CD8-positive, alpha-beta T cell (primary cell): ENCODE measurements at regions of chr9 and their contacts with region 1.

Region 1: DNA sequence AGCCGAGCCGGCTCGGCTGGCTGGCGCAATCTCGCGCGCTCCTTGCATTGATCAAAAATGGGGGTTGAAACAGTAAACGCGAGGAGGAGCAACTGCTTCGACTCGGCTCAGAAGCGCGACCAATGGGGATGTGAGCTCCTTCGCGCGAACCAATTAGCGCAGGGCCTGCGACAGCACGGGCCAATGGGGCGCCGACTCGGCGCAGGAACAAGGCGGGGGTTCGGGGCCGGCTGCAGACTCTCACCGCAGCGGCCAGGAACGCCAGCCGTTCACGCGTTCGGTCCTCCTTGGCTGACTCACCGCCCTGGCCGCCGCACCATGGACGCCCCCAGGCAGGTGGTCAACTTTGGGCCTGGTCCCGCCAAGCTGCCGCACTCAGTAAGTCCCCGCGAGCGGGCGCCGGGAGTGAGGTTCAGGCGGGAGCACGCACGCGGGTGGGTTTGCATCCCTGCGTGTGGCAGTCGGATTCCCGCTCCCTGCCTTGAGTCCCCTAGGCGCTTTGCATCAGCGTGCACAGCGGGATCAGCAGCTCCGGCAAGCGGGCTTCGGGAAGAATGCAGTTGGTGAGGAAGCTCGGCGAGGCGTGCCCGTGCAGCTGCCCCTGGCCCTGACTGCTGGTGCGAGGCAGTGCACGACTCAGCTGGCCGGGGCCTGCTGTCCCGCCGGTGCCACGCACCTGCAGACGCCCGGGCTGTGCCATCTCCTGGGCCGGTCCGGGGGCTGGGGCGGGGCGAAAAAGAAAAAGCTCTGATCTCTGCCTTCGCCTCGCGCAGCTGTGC is at the start of gene PSAT1:
- DNase-seq: peak; percentile 68 to 93 (median 85)
- ATAC-seq: peak; percentile 97
- H3K4me3 ChIP-seq: peak within 1 kb of the TSS; percentile 92 to 99
- H3K4me3 Mint-ChIP-seq: peak within 1 kb of the TSS; percentile 89
- H3K27ac ChIP-seq: peak within 1 kb of the TSS in 1 of 2 experiments; percentile 40
- H3K27ac Mint-ChIP-seq: peak within 1 kb of the TSS; percentile 72
- H3K4me1 ChIP-seq: peaks cover 21% of the 10 kb centered on the region
- H3K4me1 Mint-ChIP-seq: peaks cover 28% of the 10 kb centered on the region
- H3K27me3 ChIP-seq: no peaks in the 10 kb centered on the region
- H3K27me3 Mint-ChIP-seq: no peaks in the 10 kb centered on the region
- CTCF ChIP-seq: no peak
- total RNA-seq, gene PSAT1: 0.53 to 0.98 TPM

Region 2: DNA sequence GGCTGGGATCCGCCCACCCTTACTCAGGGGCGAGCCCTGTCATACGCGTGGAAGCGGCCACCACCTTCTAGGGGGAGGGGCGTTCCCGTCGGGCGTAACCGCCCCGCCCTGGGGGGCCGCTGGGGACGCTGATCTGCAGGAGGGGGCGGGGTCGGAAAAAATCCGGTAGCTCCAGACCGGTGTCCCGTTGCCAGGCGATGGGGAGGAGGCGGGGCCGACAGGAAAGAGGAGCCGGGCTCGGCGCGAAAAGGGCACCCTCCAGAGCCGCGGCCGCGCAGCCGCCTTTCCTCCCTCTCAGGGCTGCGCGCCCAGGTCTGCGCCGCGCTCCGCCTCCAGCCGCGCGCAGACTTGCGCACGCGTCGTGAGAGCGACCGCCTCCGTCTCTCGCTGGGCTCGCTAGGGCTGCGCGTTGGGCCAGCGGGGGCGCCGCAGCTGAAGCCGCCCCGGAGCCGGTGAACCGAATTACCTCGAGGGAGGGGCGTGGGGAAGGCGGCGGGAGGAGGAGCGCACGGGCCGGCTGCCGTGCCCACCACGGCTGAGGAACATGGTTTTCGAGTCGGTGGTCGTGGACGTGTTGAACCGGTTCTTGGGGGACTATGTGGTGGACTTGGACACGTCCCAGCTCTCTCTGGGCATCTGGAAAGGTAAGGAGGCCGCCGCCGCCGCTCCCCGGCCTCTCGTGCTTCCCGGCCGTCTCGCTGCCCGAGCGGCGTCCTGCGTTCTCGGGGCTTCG is 1119.8 kb before region 1 on chr9 and contains the start of gene VPS13A:
- CTCF ChIA-PET with region 1: no interaction called
- POLR2A ChIA-PET with region 1: interaction called, 4 read pairs
- intact Hi-C with region 1: loop called in 1 of 2 experiments (anchors 5 kb)
- DNase-seq: peak; percentile 74 to 96 (median 91)
- ATAC-seq: peak; percentile 81
- H3K4me3 ChIP-seq: peak within 1 kb of the TSS; percentile 74 to 92
- H3K4me3 Mint-ChIP-seq: peak within 1 kb of the TSS; percentile 92
- H3K27ac ChIP-seq: peak within 1 kb of the TSS; percentile 72 to 82
- H3K27ac Mint-ChIP-seq: peak within 1 kb of the TSS; percentile 93
- H3K4me1 ChIP-seq: peaks cover 11% of the 10 kb centered on the region
- H3K4me1 Mint-ChIP-seq: peaks cover 40% of the 10 kb centered on the region
- H3K27me3 ChIP-seq: no peaks in the 10 kb centered on the region
- H3K27me3 Mint-ChIP-seq: no peaks in the 10 kb centered on the region
- CTCF ChIP-seq: no peak
- total RNA-seq, gene VPS13A: 35.5 to 37.4 TPM

Region 3: GRCh38 chr9:78130004-78130403 is 167.1 kb before region 1 on chr9:
- CTCF ChIA-PET with region 1: no interaction called
- POLR2A ChIA-PET with region 1: no interaction called
- intact Hi-C with region 1: loop called in 1 of 2 experiments (anchors 2 kb)
- DNase-seq: no peak
- ATAC-seq: no peak
- H3K4me3 ChIP-seq: no peak overlapping the region
- H3K4me3 Mint-ChIP-seq: no peak overlapping the region
- H3K27ac ChIP-seq: no peak overlapping the region
- H3K27ac Mint-ChIP-seq: no peak overlapping the region
- H3K4me1 ChIP-seq: peaks cover 13% of the 10 kb centered on the region
- H3K4me1 Mint-ChIP-seq: peaks cover 10% of the 10 kb centered on the region
- H3K27me3 ChIP-seq: no peaks in the 10 kb centered on the region
- H3K27me3 Mint-ChIP-seq: peaks cover 2% of the 10 kb centered on the region
- CTCF ChIP-seq: no peak

Region 4: GRCh38 chr9:78235756-78236538 is 61.1 kb before region 1 on chr9 and contains the start of gene CEP78:
- CTCF ChIA-PET with region 1: interaction called, 4 read pairs
- POLR2A ChIA-PET with region 1: interaction called, 10 read pairs
- intact Hi-C with region 1: loop called (anchors 1 to 2 kb)
- DNase-seq: peak; percentile 71 to 95 (median 87)
- ATAC-seq: peak; percentile 97
- H3K4me3 ChIP-seq: peak within 1 kb of the TSS; percentile 90 to 91
- H3K4me3 Mint-ChIP-seq: no peak within 1 kb of the TSS
- H3K27ac ChIP-seq: peak within 1 kb of the TSS; percentile 83 to 87
- H3K27ac Mint-ChIP-seq: peak within 1 kb of the TSS; percentile 93
- H3K4me1 ChIP-seq: peaks cover 33% of the 10 kb centered on the region
- H3K4me1 Mint-ChIP-seq: peaks cover 36% of the 10 kb centered on the region
- H3K27me3 ChIP-seq: no peaks in the 10 kb centered on the region
- H3K27me3 Mint-ChIP-seq: no peaks in the 10 kb centered on the region
- CTCF ChIP-seq: no peak
- total RNA-seq, gene CEP78: 17.7 to 18.5 TPM

Region 5: DNA sequence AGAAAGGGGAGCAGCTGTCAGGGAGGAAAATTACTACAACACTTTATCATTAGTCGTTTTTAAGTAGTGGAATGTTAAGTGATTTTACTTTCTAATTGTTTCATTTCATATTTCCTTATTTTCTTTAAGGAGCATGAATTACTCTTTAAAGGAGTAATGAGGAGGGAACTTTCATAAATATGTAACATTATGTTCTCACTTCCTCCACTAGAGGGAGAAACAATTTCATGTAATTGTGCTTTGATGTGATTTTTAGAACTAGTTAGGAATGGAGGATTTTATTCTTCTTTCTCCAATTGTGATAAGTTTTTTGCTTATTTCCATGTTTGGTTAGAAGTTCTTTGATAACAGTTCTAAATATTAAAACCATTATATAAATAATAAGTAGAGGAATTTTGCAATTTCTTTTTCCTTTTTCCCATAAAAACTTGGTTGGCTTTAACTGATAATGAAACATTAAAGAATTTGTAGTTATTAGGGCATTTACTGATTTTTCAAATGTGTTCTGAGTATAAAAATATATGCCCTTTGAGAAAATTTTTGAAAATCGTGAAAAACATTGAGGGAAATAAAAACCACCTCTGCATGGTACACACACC is 35.6 kb before region 1 on chr9:
- CTCF ChIA-PET with region 1: interaction called, 4 read pairs
- POLR2A ChIA-PET with region 1: interaction called, 6 read pairs
- intact Hi-C with region 1: loop called in 1 of 2 experiments (anchors 5 kb)
- DNase-seq: peak in 2 of 9 experiments; percentile 33 to 53
- ATAC-seq: peak; percentile 36
- H3K4me3 ChIP-seq: no peak overlapping the region
- H3K4me3 Mint-ChIP-seq: no peak overlapping the region
- H3K27ac ChIP-seq: no peak overlapping the region
- H3K27ac Mint-ChIP-seq: no peak overlapping the region
- H3K4me1 ChIP-seq: no peaks in the 10 kb centered on the region
- H3K4me1 Mint-ChIP-seq: no peaks in the 10 kb centered on the region
- H3K27me3 ChIP-seq: no peaks in the 10 kb centered on the region
- H3K27me3 Mint-ChIP-seq: no peaks in the 10 kb centered on the region
- CTCF ChIP-seq: peak; percentile 80

Region 6: GRCh38 chr9:78351816-78352215 is 54.7 kb after region 1 on chr9:
- CTCF ChIA-PET with region 1: no interaction called
- POLR2A ChIA-PET with region 1: no interaction called
- intact Hi-C with region 1: no loop called
- DNase-seq: peak in 1 of 9 experiments; percentile 17
- ATAC-seq: peak; percentile 93
- H3K4me3 ChIP-seq: no peak overlapping the region
- H3K4me3 Mint-ChIP-seq: peak overlapping the region; percentile 43
- H3K27ac ChIP-seq: no peak overlapping the region
- H3K27ac Mint-ChIP-seq: peak overlapping the region; percentile 79
- H3K4me1 ChIP-seq: peaks cover 4% of the 10 kb centered on the region
- H3K4me1 Mint-ChIP-seq: peaks cover 15% of the 10 kb centered on the region
- H3K27me3 ChIP-seq: peaks cover 0 to 3% of the 10 kb centered on the region in 2 experiments
- H3K27me3 Mint-ChIP-seq: no peaks in the 10 kb centered on the region
- CTCF ChIP-seq: no peak

Region 7: DNA sequence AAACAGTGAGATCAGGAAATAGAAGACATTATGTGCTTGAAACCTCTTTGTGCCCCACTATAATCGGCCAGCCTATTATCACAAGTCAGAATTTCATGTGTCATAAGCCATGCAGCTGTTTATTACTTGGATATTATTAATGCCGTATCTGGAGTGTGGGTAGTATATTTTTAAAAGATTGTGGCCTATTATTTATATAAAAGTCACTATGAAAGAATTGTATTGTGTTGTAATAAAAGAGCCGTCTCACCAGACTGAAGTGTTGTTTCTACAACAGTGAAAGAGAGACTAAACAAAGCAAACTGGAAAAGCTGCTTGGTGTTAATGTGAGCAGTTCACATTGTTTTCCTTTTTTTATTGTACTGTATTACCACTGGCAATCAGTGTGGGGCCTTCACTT is 448.9 kb after region 1 on chr9:
- CTCF ChIA-PET with region 1: no interaction called
- POLR2A ChIA-PET with region 1: no interaction called
- intact Hi-C with region 1: no loop called
- DNase-seq: no peak
- ATAC-seq: no peak
- H3K4me3 ChIP-seq: no peak overlapping the region
- H3K4me3 Mint-ChIP-seq: no peak overlapping the region
- H3K27ac ChIP-seq: no peak overlapping the region
- H3K27ac Mint-ChIP-seq: no peak overlapping the region
- H3K4me1 ChIP-seq: no peaks in the 10 kb centered on the region
- H3K4me1 Mint-ChIP-seq: no peaks in the 10 kb centered on the region
- H3K27me3 ChIP-seq: no peaks in the 10 kb centered on the region
- H3K27me3 Mint-ChIP-seq: no peaks in the 10 kb centered on the region
- CTCF ChIP-seq: no peak